Mammary epithelial cell (primary cell): ENCODE measurements at regions of chr12 and their contacts with region 1.

Region 1: GRCh38 chr12:9651265-9651729 is 18.2 kb upstream of the CLEC2D start:
- DNase-seq: peak; percentile 66
- H3K4me3 ChIP-seq: no peak overlapping the region
- H3K27ac ChIP-seq: peak overlapping the region; percentile 90
- H3K4me1 ChIP-seq: peaks cover 34% of the 10 kb centered on the region
- H3K27me3 ChIP-seq: no peaks in the 10 kb centered on the region
- CTCF ChIP-seq: no peak

Region 2: DNA sequence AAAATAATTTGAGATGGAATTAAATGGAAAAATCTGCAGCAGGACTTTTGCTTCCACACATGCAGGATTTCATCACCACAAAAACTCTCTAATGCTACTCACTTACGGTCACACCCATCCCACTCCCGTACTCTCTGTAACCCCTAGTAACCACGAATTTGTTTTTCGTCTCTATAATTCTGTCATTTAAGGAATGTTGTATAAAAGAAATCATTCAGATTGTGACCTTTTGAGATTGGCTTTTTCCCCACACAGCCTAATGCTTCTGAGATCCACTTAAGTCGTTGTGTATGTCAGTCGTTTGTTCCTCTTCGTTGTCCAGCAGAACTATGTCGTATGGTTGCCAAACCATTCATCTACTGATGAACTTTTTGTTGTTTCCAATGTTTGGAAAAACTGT is 423.3 kb before region 1 on chr12:
- CTCF ChIA-PET with region 1: no interaction called
- dilution Hi-C with region 1: no loop called
- in situ Hi-C with region 1: no loop called
- intact Hi-C with region 1: no loop called
- DNase-seq: no peak
- H3K4me3 ChIP-seq: no peak overlapping the region
- H3K27ac ChIP-seq: no peak overlapping the region
- H3K4me1 ChIP-seq: no peaks in the 10 kb centered on the region
- H3K27me3 ChIP-seq: no peaks in the 10 kb centered on the region
- CTCF ChIP-seq: no peak

Region 3: GRCh38 chr12:9673404-9674225 is 22.3 kb after region 1 on chr12:
- CTCF ChIA-PET with region 1: no interaction called
- dilution Hi-C with region 1: no loop called
- in situ Hi-C with region 1: no loop called
- intact Hi-C with region 1: loop called (anchors 2 kb)
- DNase-seq: peak; percentile 94
- H3K4me3 ChIP-seq: no peak overlapping the region
- H3K27ac ChIP-seq: peak overlapping the region; percentile 56
- H3K4me1 ChIP-seq: peaks cover 19% of the 10 kb centered on the region
- H3K27me3 ChIP-seq: no peaks in the 10 kb centered on the region
- CTCF ChIP-seq: no peak